SK-MEL-5 (cell line): ENCODE measurements at regions of chr13 and their contacts with region 1.

Region 1: DNA sequence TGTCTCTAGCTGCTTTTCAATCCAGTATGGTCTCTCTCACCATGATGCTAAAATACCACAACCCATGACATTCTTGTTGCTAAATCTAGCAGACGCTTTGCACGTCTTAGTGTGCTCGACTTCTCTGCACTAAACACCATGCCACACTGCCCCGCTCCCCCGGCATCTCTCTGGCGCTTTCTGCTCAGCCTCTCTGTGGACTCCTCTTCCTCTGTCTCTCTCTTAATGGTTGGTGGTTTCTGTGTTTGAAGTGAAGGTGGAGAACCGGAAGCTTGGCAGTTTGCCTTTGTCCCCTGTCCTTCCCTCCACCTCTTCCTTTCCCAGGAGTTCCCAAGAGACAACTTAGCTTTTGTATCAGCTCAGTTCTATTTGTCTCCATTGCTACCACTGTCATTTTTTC is 8.8 kb downstream of the ERCC5 start:
- DNase-seq: no peak

Region 2: GRCh38 chr13:102466610-102467190 is 388.0 kb before region 1 on chr13:
- in situ Hi-C with region 1: no loop called
- DNase-seq: no peak

Region 3: DNA sequence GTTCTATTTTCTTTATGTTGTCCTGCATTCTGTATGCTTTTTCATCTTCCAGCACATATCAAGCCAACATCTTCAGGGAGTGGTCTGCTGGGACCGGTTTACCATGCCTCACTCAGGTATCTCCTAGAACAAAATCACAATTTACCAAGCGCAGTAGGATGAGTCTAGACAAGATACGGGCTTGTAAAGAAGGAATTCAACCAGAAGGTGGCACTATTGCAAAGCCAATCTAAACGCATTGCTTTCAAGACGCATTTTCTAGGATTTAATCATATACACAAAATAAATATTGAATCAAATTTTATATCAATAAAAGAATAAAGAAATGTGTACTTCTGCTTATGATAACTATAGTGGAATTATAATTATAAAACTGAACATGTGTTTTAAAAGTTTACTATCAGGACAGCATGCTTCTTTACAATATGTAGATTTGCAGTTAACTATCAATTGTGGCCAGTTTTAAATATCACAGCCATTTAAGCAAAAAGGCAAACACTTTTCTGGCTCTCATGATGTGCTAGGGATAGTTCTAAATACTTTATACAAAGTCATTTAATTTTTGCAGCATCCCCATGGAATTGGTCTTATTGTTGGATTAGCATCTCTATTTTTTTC is 274.0 kb before region 1 on chr13:
- in situ Hi-C with region 1: loop called (anchors 10 kb)
- DNase-seq: peak; percentile 74